Left colon (tissue), 2 donors: ENCODE measurements at regions of chr12 and their contacts with region 1.

Region 1: GRCh38 chr12:19757317-19757877 is 318.1 kb downstream of the AEBP2 start:
- DNase-seq: no peak
- ATAC-seq: peak; percentile 64

Region 2: GRCh38 chr12:19893514-19893913 is 136.1 kb after region 1 on chr12:
- intact Hi-C with region 1: loop called in 1 of 2 experiments (anchors 5 kb)
- DNase-seq: no peak
- ATAC-seq: peak; percentile 67

Region 3: DNA sequence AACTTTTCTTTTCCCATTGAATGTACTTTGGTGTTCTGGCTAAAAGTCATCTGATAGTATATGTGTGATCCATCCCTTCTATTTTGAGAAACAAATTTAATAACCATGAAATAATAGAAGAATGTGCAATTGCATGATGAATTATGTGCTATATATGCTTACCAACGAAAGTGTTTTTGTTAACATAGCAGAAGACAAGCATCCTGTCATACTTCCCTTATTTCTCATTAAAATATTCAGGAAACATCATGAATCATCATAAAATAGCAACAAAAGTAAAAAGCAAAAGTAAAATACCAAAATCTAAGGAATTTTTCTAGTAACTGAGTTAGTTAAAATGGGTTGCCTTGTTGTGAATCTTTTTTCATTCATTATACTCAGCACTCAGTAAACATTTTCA is 202.0 kb after region 1 on chr12:
- intact Hi-C with region 1: no loop called
- DNase-seq: no peak
- ATAC-seq: no peak